ENCODE measurements at regions of chr6 and their contacts with region 1.

Region 1: GRCh38 chr6:15245361-15246216 is at the start of gene JARID2:
- DNase-seq: peak; percentile 95
- H3K4me3 Mint-ChIP-seq: peak within 1 kb of the TSS; percentile 74
- H3K27ac Mint-ChIP-seq: peak within 1 kb of the TSS; percentile 96
- H3K4me1 Mint-ChIP-seq: no peaks in the 10 kb centered on the region
- H3K27me3 Mint-ChIP-seq: no peaks in the 10 kb centered on the region
- CTCF ChIP-seq: no peak
- total RNA-seq, gene JARID2: 8.1 and 9.4 TPM in 2 replicates

Region 2: DNA sequence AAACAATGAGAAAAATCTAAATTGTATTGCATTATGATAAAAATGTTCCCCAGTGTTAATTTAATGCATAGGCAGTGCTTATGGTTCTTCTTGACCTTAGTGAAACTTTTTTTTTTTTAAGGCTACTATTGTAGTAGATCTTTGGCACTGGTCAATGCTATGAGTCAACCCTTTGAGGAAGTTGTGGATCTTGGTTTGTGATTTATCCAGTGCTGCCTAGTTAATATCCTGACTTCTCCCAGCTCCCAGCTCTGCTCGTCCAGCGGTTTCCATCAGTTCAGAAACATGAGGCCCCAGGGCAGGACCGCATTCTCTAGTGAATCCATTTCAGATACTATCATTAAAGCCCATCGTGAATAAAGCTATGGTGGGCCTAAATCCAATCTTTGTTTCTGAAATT is 364.2 kb before region 1 on chr6:
- CTCF ChIA-PET with region 1: no interaction called
- intact Hi-C with region 1: loop called (anchors 10 kb)
- DNase-seq: peak; percentile 14
- H3K4me3 Mint-ChIP-seq: no peak overlapping the region
- H3K27ac Mint-ChIP-seq: peak overlapping the region; percentile 24
- H3K4me1 Mint-ChIP-seq: peaks cover 52% of the 10 kb centered on the region
- H3K27me3 Mint-ChIP-seq: no peaks in the 10 kb centered on the region
- CTCF ChIP-seq: no peak

Region 3: DNA sequence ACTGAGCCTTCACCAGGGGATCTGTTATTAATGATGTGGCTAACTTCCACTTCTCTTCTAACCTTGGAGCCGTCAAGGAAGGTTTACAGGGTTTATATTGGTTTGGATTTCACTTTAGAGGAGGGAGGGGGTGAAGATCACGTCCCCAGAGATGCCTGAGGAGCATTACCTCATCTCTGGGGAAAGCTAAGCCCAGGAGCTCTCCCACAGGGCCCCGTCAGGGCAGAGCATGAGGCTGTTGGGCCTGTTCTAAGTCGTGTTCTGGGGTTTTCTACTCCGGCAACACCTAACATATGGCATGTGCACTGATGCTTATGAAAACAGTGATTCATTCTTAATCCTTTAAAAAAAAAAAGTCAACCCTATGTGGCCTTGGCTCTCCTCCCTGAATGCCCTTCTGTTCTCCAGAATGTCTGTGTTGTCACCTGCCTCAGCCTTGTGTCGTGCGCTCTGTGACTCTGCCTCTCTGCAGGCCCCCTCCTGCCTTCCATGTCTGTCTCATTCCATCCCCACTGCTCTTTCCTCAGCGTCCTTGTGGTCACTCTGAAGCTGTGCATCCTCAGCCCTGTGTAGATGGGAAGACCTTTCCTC is 97.1 kb before region 1 on chr6:
- CTCF ChIA-PET with region 1: no interaction called
- intact Hi-C with region 1: no loop called
- DNase-seq: peak; percentile 6
- H3K4me3 Mint-ChIP-seq: no peak overlapping the region
- H3K27ac Mint-ChIP-seq: no peak overlapping the region
- H3K4me1 Mint-ChIP-seq: peaks cover 9% of the 10 kb centered on the region
- H3K27me3 Mint-ChIP-seq: no peaks in the 10 kb centered on the region
- CTCF ChIP-seq: no peak

Region 4: GRCh38 chr6:15227827-15228318 is 17.7 kb before region 1 on chr6:
- CTCF ChIA-PET with region 1: no interaction called
- intact Hi-C with region 1: no loop called
- DNase-seq: no peak
- H3K4me3 Mint-ChIP-seq: no peak overlapping the region
- H3K27ac Mint-ChIP-seq: no peak overlapping the region
- H3K4me1 Mint-ChIP-seq: no peaks in the 10 kb centered on the region
- H3K27me3 Mint-ChIP-seq: no peaks in the 10 kb centered on the region
- CTCF ChIP-seq: no peak

Region 5: DNA sequence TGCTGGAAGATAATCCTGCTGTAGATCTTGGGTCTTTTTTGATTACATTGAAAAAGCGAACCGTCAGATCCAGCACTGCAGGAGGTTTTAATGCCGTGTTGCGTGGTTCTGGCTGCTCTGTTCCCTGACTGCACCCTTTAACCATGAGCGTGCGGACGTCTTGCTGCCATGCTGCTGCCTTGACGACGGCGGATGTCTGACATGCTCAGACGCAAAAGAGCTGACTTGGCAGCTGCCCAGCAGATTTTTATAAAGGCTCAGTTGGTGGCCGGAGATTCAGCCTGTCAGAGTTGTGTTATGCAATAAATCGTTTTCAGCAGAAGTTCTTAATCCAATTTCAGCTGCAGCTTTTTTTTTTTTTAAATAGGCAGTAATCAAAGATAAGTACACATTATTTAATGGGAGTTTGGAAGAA is 119.7 kb after region 1 on chr6:
- CTCF ChIA-PET with region 1: no interaction called
- intact Hi-C with region 1: loop called (anchors 10 kb)
- DNase-seq: peak; percentile 46
- H3K4me3 Mint-ChIP-seq: no peak overlapping the region
- H3K27ac Mint-ChIP-seq: no peak overlapping the region
- H3K4me1 Mint-ChIP-seq: peaks cover 24% of the 10 kb centered on the region
- H3K27me3 Mint-ChIP-seq: no peaks in the 10 kb centered on the region
- CTCF ChIP-seq: no peak

Region 6: GRCh38 chr6:15441215-15441868 is 195.8 kb after region 1 on chr6:
- CTCF ChIA-PET with region 1: no interaction called
- intact Hi-C with region 1: loop called (anchors 5 kb)
- DNase-seq: peak; percentile 39
- H3K4me3 Mint-ChIP-seq: no peak overlapping the region
- H3K27ac Mint-ChIP-seq: no peak overlapping the region
- H3K4me1 Mint-ChIP-seq: peaks cover 35% of the 10 kb centered on the region
- H3K27me3 Mint-ChIP-seq: no peaks in the 10 kb centered on the region
- CTCF ChIP-seq: peak; percentile 13

Measured in Calu3 (cell line).